ENCODE measurements at regions of chr10 and their contacts with region 1.

Region 1: DNA sequence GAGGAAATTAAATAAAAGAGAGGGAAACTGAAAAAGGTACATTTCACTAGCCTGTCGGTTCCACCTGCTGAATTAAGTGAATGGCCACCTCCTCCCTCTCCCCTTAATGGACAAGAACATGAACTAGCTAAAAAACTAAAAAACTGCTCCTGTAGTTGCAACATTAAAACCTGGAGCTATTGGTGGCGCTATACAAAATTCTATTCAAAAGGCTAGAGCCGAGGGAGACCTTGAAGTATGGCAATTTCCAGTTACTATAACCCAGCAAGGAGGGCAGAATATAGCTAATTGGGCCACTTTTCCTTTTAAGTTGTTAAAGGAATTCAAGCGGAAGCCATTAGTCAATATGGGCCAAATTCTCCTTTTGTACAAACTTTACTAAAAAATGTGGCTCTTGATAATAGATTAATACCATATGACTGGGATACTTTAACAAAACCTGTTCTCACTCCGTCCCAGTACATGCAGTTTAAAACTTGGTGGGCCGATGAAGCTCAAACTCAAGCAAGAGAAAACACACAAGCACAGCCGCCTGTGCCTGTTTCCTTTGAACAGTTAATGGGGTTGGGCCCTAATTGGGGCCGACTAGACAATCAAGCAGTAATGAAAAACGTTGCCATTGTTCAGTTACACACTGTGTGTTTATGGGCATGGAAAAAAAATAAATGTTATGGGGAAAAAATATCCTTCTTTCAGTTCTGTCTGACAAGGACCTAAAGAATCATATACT is 6.5 kb upstream of the CHST3 start:
- DNase-seq: no peak
- ATAC-seq: no peak
- H3K4me3 ChIP-seq: no peak overlapping the region
- H3K27ac ChIP-seq: no peak overlapping the region
- H3K4me1 ChIP-seq: peaks cover 6% of the 10 kb centered on the region
- H3K27me3 ChIP-seq: no peaks in the 10 kb centered on the region
- CTCF ChIP-seq: peak; percentile 19; the same call in 1 of the 2 replicates

Region 2: DNA sequence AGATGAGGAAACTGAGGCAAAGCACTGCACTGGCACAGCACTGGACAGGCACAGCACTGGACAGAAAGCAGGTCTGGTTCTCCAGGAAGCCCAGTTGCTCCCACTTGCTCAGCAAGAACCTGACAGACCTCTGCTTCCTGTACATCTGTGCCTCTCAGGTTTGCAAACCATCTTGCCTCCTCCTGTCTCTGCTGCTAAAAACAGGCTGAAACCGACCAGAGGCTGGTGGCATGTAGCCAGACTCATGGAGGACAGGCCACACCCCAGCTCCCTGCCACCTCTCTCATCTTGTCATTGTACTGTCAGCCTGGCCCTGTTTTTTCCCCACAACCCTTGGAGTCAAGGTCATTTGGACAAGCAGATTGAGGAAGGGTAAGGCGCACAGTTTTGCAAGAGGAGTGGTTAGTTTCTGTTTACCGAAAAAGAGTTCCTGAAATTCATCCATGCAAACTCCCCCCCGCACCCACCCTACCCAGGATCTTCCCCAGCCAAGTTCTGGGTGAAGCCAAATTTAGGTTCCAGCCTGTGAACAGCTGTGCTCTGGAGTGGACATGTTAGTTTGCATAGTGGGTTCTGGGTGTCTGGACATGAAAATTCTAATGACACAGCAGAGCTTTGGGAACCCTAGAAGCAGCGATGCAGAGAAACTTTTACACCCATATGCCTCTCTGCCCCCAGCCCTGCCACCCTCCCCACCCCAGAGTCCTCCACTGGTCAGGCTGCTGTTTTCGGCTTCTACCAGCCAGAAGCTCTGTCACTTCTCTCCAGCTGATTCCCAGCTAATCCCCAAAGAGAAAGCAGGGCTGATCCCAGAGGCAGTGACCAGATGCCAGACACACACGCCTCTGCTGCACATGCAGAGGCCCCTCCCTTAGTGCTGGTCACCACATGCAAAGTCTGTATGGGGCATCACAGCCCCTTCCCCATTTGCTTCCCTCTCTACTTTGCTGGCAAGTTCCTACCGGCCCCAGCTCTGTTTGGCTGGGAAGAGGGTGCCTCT is 229.7 kb before region 1 on chr10:
- CTCF ChIA-PET with region 1: no interaction called
- POLR2A ChIA-PET with region 1: no interaction called
- intact Hi-C with region 1: no loop called
- DNase-seq: peak; percentile 18
- ATAC-seq: peak; percentile 31; the same call in 1 of the 2 replicates
- H3K4me3 ChIP-seq: no peak overlapping the region
- H3K27ac ChIP-seq: no peak overlapping the region
- H3K4me1 ChIP-seq: peaks cover 19% of the 10 kb centered on the region
- H3K27me3 ChIP-seq: no peaks in the 10 kb centered on the region
- CTCF ChIP-seq: no peak

Region 3: DNA sequence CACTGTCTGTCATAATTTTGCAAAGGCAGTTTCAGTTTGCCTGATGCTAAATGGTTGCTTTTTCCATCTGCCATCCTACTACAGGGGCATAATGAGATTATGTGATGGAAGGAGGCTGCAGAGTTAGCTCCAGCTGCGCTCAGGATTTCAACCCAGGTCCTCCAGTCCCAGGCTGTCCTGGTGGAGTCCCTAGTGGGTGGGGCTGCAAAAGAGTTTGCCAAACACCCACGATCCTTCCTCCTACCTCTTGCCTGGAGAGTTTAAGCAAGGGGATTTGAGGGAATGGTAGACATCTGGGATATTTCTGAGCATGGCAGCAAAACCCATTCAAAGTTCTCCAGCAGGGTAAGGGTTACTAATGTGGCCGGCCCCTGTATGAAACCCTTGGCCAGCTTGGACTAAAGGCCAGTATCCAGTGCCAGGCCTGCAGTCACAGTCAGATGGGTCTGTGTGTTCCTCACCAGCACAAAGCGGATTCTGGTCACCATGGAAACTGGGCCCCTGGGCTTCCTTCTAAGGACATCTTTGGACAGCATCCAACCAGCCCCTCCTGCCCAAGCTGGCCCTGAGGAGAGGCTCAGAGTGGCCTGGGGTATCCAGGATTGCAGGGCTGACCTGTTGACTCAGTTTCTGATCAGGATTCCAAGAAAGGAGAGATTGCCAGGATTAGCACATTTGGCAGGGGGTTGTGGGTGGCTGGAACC is 36.2 kb before region 1 on chr10:
- CTCF ChIA-PET with region 1: no interaction called
- POLR2A ChIA-PET with region 1: no interaction called
- intact Hi-C with region 1: loop called (anchors 5 kb)
- DNase-seq: no peak
- ATAC-seq: peak; percentile 31
- H3K4me3 ChIP-seq: no peak overlapping the region; the same call in 1 of the 2 replicates
- H3K27ac ChIP-seq: peak overlapping the region; percentile 67
- H3K4me1 ChIP-seq: peaks cover 24% of the 10 kb centered on the region
- H3K27me3 ChIP-seq: no peaks in the 10 kb centered on the region
- CTCF ChIP-seq: no peak

Region 4: DNA sequence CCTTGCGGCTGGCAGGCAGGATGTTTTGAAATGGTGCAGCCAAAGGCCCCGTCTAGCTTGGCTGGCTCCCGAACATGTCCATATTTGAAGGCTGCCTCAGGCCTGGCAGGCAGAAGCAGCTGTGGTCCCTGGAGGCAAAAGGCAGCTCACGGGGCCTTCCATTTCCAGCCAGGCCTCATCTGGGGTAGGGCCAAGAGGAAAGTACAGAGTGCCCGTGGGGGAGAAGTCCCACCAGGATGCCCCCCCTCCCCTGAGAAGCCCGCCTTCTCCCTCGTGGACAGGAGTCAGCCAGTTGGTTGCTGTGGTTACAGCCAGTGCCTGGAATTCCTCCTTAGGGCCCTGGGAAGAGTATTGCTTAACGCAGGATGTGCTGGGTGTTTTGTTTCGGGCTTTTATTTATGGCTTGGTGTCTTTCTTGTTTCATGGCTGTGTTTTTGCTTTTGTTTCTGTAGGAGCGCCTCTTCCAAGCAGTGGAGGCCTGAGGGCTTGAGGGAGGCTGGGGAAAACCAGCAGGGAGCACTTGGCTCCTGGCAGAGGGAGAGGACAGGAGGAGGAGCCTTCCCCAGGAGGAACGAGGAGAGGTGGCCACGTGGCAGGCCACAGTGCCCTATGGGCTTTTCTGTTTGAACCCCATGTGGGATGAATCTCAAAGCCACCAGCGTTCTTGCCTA is 51.8 kb after region 1 on chr10:
- CTCF ChIA-PET with region 1: no interaction called
- POLR2A ChIA-PET with region 1: no interaction called
- intact Hi-C with region 1: no loop called
- DNase-seq: no peak
- ATAC-seq: no peak
- H3K4me3 ChIP-seq: no peak overlapping the region
- H3K27ac ChIP-seq: no peak overlapping the region
- H3K4me1 ChIP-seq: no peaks in the 10 kb centered on the region
- H3K27me3 ChIP-seq: no peaks in the 10 kb centered on the region
- CTCF ChIP-seq: no peak

Region 5: DNA sequence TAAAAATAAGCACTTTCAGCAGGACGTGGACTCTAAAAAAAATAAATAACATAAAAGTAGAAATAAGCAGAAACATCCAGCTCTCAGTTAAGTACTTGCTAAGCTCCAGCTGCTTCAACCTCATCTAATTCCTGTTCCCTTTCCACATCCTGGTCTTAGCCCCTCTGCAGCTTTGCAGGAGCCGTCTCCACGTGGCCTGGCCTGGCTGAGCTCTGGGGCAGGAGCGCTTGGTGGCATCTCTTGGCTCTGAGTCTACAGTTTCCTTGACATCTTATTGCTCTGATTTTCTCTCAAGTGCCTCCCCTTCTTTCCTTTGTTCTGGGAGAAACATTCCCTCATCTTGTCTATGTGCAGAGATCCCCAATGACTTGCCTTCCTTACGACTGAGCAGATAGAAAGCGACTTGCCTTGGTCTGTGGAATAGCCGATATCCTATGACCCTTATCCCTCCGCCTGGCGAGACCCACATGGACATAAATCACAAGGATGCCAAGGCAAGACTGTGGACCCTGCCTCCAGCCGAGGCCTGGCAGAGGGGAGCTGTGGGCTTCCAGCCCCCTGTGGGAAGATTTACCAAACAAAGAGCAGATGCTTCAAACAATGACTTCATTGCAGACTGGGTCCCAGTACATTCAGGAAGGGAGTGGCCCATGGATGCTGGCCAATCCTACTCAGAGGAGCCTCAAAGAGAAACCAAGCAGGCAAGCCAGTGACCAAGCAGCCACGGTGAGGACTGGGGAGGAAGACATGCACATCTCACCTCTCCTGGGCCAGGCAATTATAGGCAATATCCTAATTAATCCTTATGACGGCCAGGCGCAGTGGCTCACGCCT is 68.8 kb after region 1 on chr10:
- CTCF ChIA-PET with region 1: no interaction called
- POLR2A ChIA-PET with region 1: no interaction called
- intact Hi-C with region 1: loop called (anchors 5 kb)
- DNase-seq: peak; percentile 57
- ATAC-seq: peak; percentile 56
- H3K4me3 ChIP-seq: no peak overlapping the region
- H3K27ac ChIP-seq: peak overlapping the region; percentile 91; the same call in 1 of the 2 replicates
- H3K4me1 ChIP-seq: peaks cover 22% of the 10 kb centered on the region
- H3K27me3 ChIP-seq: no peaks in the 10 kb centered on the region
- CTCF ChIP-seq: no peak

Measured in PC-3 (cell line).